ENCODE measurements at regions of chr3 and their contacts with region 1.

Region 1: DNA sequence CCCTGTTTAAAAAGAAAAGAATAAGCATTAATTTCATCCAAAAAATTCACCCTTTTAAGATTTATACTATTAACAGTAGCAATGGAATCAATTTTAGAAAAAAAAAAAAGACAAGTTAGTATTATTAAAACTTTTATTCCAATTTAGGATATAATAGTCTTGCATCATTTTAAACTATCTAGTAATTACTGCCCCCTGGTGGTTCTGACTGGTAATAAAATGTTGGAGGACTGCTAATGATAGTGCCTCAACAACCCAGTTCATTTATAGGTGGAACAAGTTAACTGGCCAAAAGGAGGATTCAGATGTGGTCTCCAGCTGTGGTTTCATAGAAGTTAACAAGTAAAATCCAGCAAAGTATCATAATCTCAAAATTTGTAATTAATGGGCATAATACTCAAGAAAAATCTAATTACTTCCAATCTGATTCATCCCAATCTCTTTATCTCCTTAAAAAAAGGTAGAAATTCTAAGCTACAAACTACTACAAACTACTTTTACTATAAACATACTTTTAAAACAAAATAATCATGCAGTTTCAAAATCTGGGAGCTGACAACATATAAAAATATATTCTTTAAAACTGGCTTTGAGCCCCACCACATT is 30.7 kb upstream of the WDR49 start:
- DNase-seq: peak in 25 of 42 donors; percentile 10 to 87 (median 63)

Region 2: GRCh38 chr3:167394003-167394402 is 290.5 kb before region 1 on chr3:
- intact Hi-C with region 1: loop called (anchors 10 kb)
- DNase-seq: peak in 1 of 42 donors; percentile 6